IMR-90 (cell line): ENCODE measurements at regions of chr3 and their contacts with region 1.

Region 1: GRCh38 chr3:67783281-67784250 is 129.2 kb upstream of the SUCLG2 start:
- DNase-seq: peak; percentile 59
- ATAC-seq: peak; percentile 81
- H3K4me3 ChIP-seq: no peak overlapping the region
- H3K27ac ChIP-seq: peak overlapping the region; percentile 95; the same call in 1 of the 2 replicates
- H3K4me1 ChIP-seq: peaks cover 4% of the 10 kb centered on the region; the same call in 1 of the 2 replicates
- H3K27me3 ChIP-seq: no peaks in the 10 kb centered on the region; the same call in 1 of the 2 replicates
- CTCF ChIP-seq: no peak
- POLR2A ChIP-seq: no peak
- RAD21 ChIP-seq: no peak

Region 2: DNA sequence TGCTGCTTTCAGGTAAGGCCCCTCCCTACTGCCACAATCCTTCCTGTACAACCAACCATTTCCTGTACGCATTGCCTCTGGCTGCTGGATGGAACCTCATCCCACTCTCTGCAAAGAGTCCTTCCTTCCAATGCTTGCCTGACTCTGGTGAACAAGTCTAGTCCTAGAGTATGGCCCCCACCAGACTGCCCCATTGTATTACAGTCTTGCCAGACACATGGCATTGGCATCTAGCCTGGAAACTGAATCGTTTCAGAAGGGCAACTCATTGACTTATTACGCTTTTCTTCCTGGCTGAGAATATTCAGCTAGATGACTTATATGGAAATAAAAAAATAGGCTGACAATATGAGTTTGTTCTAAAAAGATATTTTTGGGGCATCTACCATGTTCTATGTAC is 299.5 kb before region 1 on chr3:
- CTCF ChIA-PET with region 1: no interaction called
- POLR2A ChIA-PET with region 1: no interaction called
- dilution Hi-C with region 1: no loop called
- in situ Hi-C with region 1: no loop called
- intact Hi-C with region 1: no loop called
- DNase-seq: no peak
- ATAC-seq: no peak
- H3K4me3 ChIP-seq: no peak overlapping the region
- H3K27ac ChIP-seq: no peak overlapping the region
- H3K4me1 ChIP-seq: no peaks in the 10 kb centered on the region
- H3K27me3 ChIP-seq: no peaks in the 10 kb centered on the region
- CTCF ChIP-seq: no peak
- POLR2A ChIP-seq: no peak
- RAD21 ChIP-seq: no peak

Region 3: DNA sequence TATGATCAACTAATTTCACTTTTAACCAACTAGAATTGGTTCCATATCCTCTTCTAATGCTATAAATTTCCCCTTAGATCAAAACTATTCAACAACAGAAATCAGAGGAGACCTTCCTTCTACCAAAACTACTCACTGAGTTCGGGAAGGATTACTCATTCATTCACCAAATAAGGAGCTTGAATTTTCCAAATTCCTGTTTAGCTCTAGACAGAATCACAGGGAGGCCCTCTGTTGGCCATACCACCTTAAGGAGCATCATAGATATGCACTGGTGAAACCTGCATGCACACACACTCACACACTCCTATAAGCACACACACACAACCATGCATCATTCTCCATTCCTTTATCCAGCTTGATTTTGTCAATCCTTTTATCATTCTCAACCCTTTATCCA is 178.2 kb before region 1 on chr3:
- CTCF ChIA-PET with region 1: no interaction called
- POLR2A ChIA-PET with region 1: no interaction called
- dilution Hi-C with region 1: no loop called
- in situ Hi-C with region 1: no loop called
- intact Hi-C with region 1: loop called (anchors 10 kb)
- DNase-seq: peak; percentile 83
- ATAC-seq: peak; percentile 95
- H3K4me3 ChIP-seq: no peak overlapping the region
- H3K27ac ChIP-seq: no peak overlapping the region
- H3K4me1 ChIP-seq: no peaks in the 10 kb centered on the region; the same call in 1 of the 2 replicates
- H3K27me3 ChIP-seq: no peaks in the 10 kb centered on the region
- CTCF ChIP-seq: peak; percentile 57
- POLR2A ChIP-seq: no peak
- RAD21 ChIP-seq: peak; percentile 54

Region 4: GRCh38 chr3:67654099-67654843 is 129.3 kb before region 1 on chr3 and contains the start of gene SUCLG2:
- CTCF ChIA-PET with region 1: interaction called, 3 read pairs
- POLR2A ChIA-PET with region 1: no interaction called
- dilution Hi-C with region 1: no loop called
- in situ Hi-C with region 1: no loop called
- intact Hi-C with region 1: loop called (anchors 2 kb)
- DNase-seq: peak; percentile 75
- ATAC-seq: peak; percentile 99
- H3K4me3 ChIP-seq: peak within 1 kb of the TSS; percentile 81
- H3K27ac ChIP-seq: peak within 1 kb of the TSS; percentile 91
- H3K4me1 ChIP-seq: peaks cover 4% of the 10 kb centered on the region
- H3K27me3 ChIP-seq: no peaks in the 10 kb centered on the region
- CTCF ChIP-seq: no peak
- POLR2A ChIP-seq: peak; percentile 86
- RAD21 ChIP-seq: no peak; the same call in 1 of the 2 replicates
- total RNA-seq, gene SUCLG2: 34.6 and 45.5 TPM in 2 replicates